Endothelial cell of umbilical vein (primary cell): ENCODE measurements at regions of chr13 and their contacts with region 1.

Region 1: GRCh38 chr13:97212601-97213040 is 9.5 kb upstream of the MBNL2 start:
- DNase-seq: peak; percentile 56
- H3K4me3 ChIP-seq: no peak overlapping the region
- H3K27ac ChIP-seq: no peak overlapping the region
- H3K4me1 ChIP-seq: no peaks in the 10 kb centered on the region
- H3K27me3 ChIP-seq: no peaks in the 10 kb centered on the region
- CTCF ChIP-seq: peak; percentile 52 to 72
- POLR2A ChIP-seq: no peak

Region 2: DNA sequence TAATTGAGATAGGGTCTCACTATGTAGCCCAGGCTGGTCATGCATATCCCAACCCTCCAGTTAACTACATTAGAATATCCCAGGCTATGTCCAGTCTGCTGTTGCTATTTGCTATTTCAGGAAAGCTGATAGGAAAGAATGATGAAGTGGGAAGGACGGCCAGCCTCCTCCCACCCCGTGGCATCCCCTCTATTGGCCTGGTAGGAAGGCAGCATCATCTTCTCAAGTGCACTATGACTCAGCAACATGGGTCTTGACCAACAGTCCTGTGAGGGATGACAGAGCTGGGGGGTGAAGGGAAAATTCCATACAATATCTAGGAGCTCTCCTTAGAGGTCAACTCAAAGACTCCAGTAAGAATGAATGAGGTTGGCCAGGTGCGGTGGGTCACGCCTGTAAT is 1863.4 kb before region 1 on chr13:
- CTCF ChIA-PET with region 1: no interaction called
- POLR2A ChIA-PET with region 1: interaction called, 10 read pairs
- dilution Hi-C with region 1: no loop called
- intact Hi-C with region 1: no loop called
- DNase-seq: no peak
- H3K4me3 ChIP-seq: no peak overlapping the region
- H3K27ac ChIP-seq: no peak overlapping the region
- H3K4me1 ChIP-seq: peaks cover under 1% of the 10 kb centered on the region
- H3K27me3 ChIP-seq: peaks cover 0 to 2% of the 10 kb centered on the region in 2 experiments
- CTCF ChIP-seq: no peak
- POLR2A ChIP-seq: no peak

Region 3: GRCh38 chr13:97359181-97360057 is 146.8 kb after region 1 on chr13:
- CTCF ChIA-PET with region 1: interaction called, 13 read pairs
- POLR2A ChIA-PET with region 1: no interaction called
- dilution Hi-C with region 1: no loop called
- intact Hi-C with region 1: loop called (anchors 1 kb)
- DNase-seq: peak; percentile 81
- H3K4me3 ChIP-seq: no peak overlapping the region
- H3K27ac ChIP-seq: peak overlapping the region; percentile 20
- H3K4me1 ChIP-seq: no peaks in the 10 kb centered on the region
- H3K27me3 ChIP-seq: no peaks in the 10 kb centered on the region
- CTCF ChIP-seq: peak; percentile 66 to 80
- POLR2A ChIP-seq: no peak

Region 4: GRCh38 chr13:97403893-97404750 is 191.5 kb after region 1 on chr13:
- CTCF ChIA-PET with region 1: no interaction called
- POLR2A ChIA-PET with region 1: no interaction called
- dilution Hi-C with region 1: no loop called
- intact Hi-C with region 1: no loop called
- DNase-seq: no peak
- H3K4me3 ChIP-seq: no peak overlapping the region
- H3K27ac ChIP-seq: no peak overlapping the region
- H3K4me1 ChIP-seq: no peaks in the 10 kb centered on the region
- H3K27me3 ChIP-seq: peaks cover 7 to 9% of the 10 kb centered on the region in 2 experiments
- CTCF ChIP-seq: no peak
- POLR2A ChIP-seq: no peak